Heart left ventricle (tissue), 16 donors: ENCODE measurements at regions of chr19 and their contacts with region 1.

Region 1: DNA sequence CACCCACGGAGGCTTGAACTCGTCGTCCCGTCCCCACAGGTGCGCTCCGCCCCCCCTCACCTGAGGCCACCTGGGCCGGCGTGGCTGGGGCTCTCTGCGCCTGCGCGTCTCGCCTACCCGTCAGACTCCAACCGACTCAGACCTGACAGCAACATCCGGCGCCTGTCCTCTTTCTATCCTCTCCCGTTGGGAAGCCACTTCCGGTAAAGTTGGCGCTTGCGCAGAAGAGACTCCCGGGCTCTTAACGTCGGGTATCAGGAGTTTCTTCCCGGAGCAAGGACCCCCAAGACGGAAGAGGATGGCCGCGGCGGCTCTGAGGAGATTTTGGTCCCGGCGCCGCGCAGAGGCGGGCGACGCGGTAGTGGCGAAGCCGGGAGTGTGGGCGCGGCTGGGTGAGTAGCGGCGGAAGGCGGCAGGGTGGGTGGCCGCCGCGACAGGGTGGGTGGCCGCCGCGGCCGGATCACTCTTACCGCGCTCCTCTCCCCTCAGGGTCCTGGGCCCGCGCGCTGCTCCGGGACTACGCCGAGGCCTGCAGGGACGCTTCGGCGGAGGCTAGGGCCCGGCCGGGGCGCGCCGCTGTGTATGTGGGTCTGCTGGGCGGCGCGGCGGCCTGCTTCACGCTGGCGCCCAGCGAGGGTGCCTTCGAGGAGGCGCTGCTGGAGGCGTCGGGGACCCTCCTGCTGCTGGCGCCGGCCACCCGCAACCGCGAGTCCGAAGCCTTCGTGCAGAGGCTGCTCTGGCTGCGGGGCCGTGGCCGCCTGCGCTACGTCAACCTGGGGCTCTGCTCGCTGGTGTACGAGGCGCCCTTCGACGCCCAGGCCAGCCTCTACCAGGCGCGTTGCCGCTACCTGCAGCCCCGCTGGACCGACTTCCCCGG is at the starts of genes TIMM29 and YIPF2:
- DNase-seq: peak; percentile 96 to 99 (median 97)
- ATAC-seq: peak; percentile 94 to 98 (median 96)
- H3K4me3 ChIP-seq: peak within 1 kb of the TSS; percentile 72 to 100 (median 96)
- H3K27ac ChIP-seq: peak within 1 kb of the TSS; percentile 59 to 92 (median 84)
- H3K4me1 ChIP-seq: peaks cover 3 to 32% (median 18%) of the 10 kb centered on the region in 12 donors
- H3K27me3 ChIP-seq: no peaks in the 10 kb centered on the region
- CTCF ChIP-seq: peak in 2 of 12 donors; percentile 8 to 16
- POLR2A ChIP-seq: peak in 1 of 2 donors; percentile 72
- total RNA-seq, gene TIMM29: 10.0 to 29.3 (median 14.5) TPM
- total RNA-seq, gene YIPF2: 11.5 to 27.1 (median 17.3) TPM

Region 2: DNA sequence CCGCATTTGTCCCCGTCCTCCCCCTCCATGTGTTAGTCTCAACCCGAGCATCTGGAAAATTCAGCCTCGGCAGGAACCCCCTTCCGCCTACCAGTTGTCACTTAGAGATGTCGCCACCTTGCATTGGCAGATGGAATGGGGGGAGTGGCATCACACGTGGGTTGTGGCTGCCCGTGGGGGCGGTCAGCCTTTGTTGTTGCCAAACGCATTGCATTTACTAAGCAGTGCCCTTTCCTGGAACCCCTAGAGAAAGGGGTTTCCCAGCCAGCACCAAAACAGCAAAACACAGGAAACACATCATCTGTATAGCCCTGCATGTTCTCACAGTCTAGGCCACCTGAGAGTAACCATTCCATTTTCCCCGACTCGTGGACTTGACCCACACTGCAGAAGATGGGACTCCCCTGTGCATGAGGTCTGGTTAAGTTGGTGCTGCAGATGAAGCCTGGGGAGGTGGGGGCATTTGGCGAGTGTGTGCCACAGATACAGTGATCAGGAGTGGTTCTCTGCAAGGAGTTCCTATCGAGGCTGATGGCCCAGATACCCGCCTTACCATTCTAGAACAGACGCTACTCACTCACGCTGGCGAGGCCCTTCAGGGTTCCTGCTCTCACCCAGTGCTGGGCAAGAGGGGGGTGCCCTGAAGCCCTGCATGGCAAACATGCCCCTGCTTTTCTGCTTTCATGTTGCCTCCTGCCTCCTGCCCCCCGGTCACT is 131.1 kb before region 1 on chr19:
- intact Hi-C with region 1: no loop called
- DNase-seq: no peak
- ATAC-seq: no peak
- H3K4me3 ChIP-seq: no peak overlapping the region
- H3K27ac ChIP-seq: peak overlapping the region in 1 of 12 donors; percentile 63
- H3K4me1 ChIP-seq: peaks cover 0 to 18% (median 13%) of the 10 kb centered on the region in 12 donors
- H3K27me3 ChIP-seq: no peaks in the 10 kb centered on the region
- CTCF ChIP-seq: no peak
- POLR2A ChIP-seq: no peak

Region 3: DNA sequence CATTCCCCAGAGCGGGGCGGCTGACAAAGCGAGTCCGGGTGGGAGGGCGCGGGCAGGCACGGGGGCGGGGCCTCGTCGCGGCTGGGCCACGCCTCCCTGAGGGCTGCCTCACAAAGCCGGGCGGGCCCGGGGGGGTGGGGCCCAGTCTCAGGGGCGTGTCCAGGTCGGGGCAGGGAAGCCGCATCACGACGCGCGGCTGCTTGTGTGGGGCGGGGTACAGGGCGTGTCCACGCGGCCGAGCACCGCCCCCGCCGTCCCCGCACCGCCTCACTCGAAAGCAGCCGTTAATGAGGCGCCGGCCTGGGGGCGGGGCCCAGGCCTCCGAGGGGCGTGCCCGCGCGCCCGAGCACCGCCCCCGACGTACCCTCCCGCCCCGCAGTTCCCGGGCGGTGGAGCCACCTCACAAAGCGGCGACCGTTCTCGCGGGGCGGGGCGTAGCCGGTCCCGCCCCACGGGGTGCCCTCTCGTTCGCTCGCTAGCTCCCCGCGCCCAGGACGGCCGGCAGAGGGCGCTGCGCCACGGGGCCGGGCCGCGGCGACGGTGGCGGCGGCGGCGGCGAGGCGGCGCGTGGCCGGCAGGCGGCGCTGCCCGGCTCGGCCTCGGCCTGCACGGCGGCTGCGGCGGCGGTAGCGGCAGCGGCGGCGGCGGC is 57.7 kb before region 1 on chr19 and contains the start of gene CARM1:
- intact Hi-C with region 1: loop called in 8 of 10 experiments (anchors 1 to 5 kb)
- DNase-seq: peak; percentile 99 to 100 (median 99)
- ATAC-seq: peak; percentile 95 to 97 (median 96)
- H3K4me3 ChIP-seq: peak within 1 kb of the TSS; percentile 53 to 96 (median 76)
- H3K27ac ChIP-seq: peak within 1 kb of the TSS in 11 of 12 donors; percentile 70 to 87 (median 81)
- H3K4me1 ChIP-seq: peaks cover 0 to 52% (median 18%) of the 10 kb centered on the region in 12 donors
- H3K27me3 ChIP-seq: no peaks in the 10 kb centered on the region
- CTCF ChIP-seq: peak; percentile 35 to 86 (median 65)
- POLR2A ChIP-seq: peak in 1 of 2 donors; percentile 39
- total RNA-seq, gene CARM1: 22.4 to 39.5 (median 29.3) TPM

Region 4: GRCh38 chr19:10876459-10877240 is 52.1 kb before region 1 on chr19:
- intact Hi-C with region 1: loop called in 8 of 10 experiments (anchors 1 to 5 kb)
- DNase-seq: peak in 3 of 5 donors; percentile 61 to 85 (median 69)
- ATAC-seq: peak; percentile 66 to 84 (median 76)
- H3K4me3 ChIP-seq: no peak overlapping the region
- H3K27ac ChIP-seq: peak overlapping the region in 11 of 12 donors; percentile 3 to 89 (median 67)
- H3K4me1 ChIP-seq: peaks cover 0 to 69% (median 40%) of the 10 kb centered on the region in 12 donors
- H3K27me3 ChIP-seq: no peaks in the 10 kb centered on the region
- CTCF ChIP-seq: no peak
- POLR2A ChIP-seq: no peak